Activated CD4-positive, alpha-beta memory T cell treated with anti-CD3 and anti-CD28 coated beads for 36 hours (primary cell): ENCODE measurements at regions of chr3 and their contacts with region 1.

Region 1: DNA sequence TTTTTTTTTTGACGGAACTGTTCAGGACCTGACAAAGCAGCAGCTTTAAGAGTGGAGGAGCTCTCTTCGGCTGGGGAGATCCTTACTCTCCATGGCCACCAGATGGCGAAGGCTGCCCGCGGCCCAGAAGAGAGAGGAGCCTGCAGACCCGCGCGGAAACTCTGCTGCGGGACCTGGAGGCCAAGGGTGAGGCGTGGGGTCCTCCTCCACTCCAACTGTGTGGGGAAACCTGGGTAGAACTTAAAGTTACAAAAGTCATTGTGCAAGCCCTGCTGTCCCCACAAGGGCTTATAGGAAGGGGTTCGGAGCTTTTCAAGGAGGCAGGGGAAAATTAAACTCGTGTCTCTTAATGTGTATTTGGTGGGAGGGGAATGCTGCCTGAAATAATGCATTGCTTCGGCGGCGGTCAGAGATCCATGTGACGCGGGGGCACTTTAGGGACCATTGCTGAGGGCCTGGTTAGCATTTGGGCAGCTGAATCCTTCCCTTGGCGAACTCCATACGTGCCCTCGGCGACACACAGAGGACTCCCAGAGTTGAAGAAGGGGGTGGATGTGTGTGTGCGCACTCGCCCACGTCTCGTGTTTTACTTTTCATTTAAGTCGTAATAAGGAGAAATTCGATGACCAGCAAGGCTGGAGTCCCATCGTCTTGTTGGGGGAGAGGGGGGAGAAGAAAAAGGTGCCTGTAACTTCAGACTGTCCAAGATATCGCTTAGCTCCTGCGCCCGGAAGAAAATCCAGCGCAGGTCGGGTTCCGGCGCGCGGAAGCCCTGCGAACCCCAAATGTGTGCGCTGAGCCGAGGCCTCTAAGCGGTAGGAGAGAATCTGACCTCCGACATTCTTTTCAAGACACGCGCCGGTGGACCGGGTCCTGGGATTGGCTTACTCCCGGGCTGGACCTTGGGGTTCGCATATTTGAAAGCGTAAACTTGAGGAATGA is 9.7 kb downstream of the EOMES start:
- DNase-seq: peak; percentile 85
- H3K4me3 Mint-ChIP-seq: peak overlapping the region; percentile 84
- H3K27ac Mint-ChIP-seq: no peak overlapping the region
- H3K4me1 Mint-ChIP-seq: peaks cover 19% of the 10 kb centered on the region
- H3K27me3 Mint-ChIP-seq: peaks cover 40% of the 10 kb centered on the region

Region 2: DNA sequence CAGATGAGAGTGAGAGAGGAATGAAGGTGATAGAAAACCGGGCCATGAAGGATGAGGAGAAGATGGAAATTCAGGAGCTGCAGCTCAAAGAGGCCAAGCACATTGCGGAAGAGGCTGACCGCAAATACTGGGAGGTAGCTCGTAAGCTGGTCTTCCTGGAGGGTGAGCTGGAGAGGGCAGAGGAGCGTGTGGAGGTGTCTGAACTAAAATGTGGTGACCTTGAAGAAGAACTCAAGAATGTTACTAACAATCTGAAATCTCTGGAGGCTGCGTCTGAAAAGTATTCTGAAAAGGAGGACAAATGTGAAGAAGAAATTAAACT is 79.2 kb before region 1 on chr3:
- CTCF ChIA-PET with region 1: no interaction called
- POLR2A ChIA-PET with region 1: no interaction called
- intact Hi-C with region 1: no loop called
- DNase-seq: no peak
- H3K4me3 Mint-ChIP-seq: peak overlapping the region; percentile 83
- H3K27ac Mint-ChIP-seq: peak overlapping the region; percentile 85
- H3K4me1 Mint-ChIP-seq: peaks cover 39% of the 10 kb centered on the region
- H3K27me3 Mint-ChIP-seq: no peaks in the 10 kb centered on the region

Region 3: GRCh38 chr3:27666708-27667107 is 45.7 kb before region 1 on chr3:
- CTCF ChIA-PET with region 1: no interaction called
- POLR2A ChIA-PET with region 1: no interaction called
- intact Hi-C with region 1: no loop called
- DNase-seq: peak; percentile 28
- H3K4me3 Mint-ChIP-seq: no peak overlapping the region
- H3K27ac Mint-ChIP-seq: no peak overlapping the region
- H3K4me1 Mint-ChIP-seq: peaks cover 9% of the 10 kb centered on the region
- H3K27me3 Mint-ChIP-seq: no peaks in the 10 kb centered on the region

Region 4: GRCh38 chr3:27681245-27681748 is 31.1 kb before region 1 on chr3:
- CTCF ChIA-PET with region 1: interaction called, 11 read pairs
- POLR2A ChIA-PET with region 1: no interaction called
- intact Hi-C with region 1: no loop called
- DNase-seq: no peak
- H3K4me3 Mint-ChIP-seq: peak overlapping the region; percentile 68
- H3K27ac Mint-ChIP-seq: peak overlapping the region; percentile 72
- H3K4me1 Mint-ChIP-seq: peaks cover 19% of the 10 kb centered on the region
- H3K27me3 Mint-ChIP-seq: no peaks in the 10 kb centered on the region

Region 5: DNA sequence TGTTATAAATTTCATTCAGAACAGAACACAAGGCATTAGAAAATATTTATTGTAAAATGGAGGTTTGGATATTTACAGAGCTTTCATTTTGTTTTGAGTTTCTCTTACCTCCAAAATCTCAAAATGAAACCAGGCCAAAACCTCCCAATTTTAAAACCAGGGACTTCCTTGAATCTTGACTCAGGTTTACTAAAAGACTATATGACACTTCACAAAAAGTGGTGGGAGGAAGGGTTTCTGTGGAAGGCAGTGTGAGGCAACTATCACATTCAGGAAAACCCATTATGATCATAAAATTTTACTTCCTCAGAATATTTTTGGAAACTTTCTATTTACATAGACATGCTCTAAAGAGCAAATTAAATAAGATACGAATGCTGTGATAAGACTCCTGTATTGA is 215.5 kb after region 1 on chr3:
- CTCF ChIA-PET with region 1: no interaction called
- POLR2A ChIA-PET with region 1: no interaction called
- intact Hi-C with region 1: no loop called
- DNase-seq: no peak
- H3K4me3 Mint-ChIP-seq: no peak overlapping the region
- H3K27ac Mint-ChIP-seq: peak overlapping the region; percentile 51
- H3K4me1 Mint-ChIP-seq: peaks cover 30% of the 10 kb centered on the region
- H3K27me3 Mint-ChIP-seq: peaks cover 1% of the 10 kb centered on the region

Region 6: DNA sequence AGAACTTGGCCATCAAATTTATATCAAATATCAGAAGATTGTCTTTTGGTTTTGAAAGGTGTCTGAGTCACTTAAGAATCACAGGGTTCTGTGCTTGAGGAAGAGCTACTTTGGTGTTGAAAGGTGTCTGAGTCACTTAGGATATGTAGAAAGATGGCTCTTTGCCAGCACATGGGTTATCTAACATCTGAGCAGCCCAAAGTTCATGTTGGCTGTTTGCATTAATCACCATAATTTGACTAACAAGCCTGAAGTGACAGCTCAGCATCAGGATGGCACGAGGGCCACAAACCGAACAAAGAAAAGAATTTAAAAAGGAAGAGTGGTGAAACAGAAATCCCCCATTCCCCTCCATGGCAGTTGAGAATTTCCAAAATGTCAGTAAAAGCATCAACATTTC is 338.5 kb after region 1 on chr3:
- CTCF ChIA-PET with region 1: interaction called, 8 read pairs
- POLR2A ChIA-PET with region 1: no interaction called
- intact Hi-C with region 1: loop called (anchors 2 kb)
- DNase-seq: peak; percentile 52
- H3K4me3 Mint-ChIP-seq: no peak overlapping the region
- H3K27ac Mint-ChIP-seq: peak overlapping the region; percentile 13
- H3K4me1 Mint-ChIP-seq: peaks cover 26% of the 10 kb centered on the region
- H3K27me3 Mint-ChIP-seq: peaks cover 10% of the 10 kb centered on the region

Region 7: GRCh38 chr3:28286595-28286994 is 574.2 kb after region 1 on chr3:
- CTCF ChIA-PET with region 1: interaction called, 38 read pairs
- POLR2A ChIA-PET with region 1: no interaction called
- intact Hi-C with region 1: loop called (anchors 1 kb)
- DNase-seq: no peak
- H3K4me3 Mint-ChIP-seq: no peak overlapping the region
- H3K27ac Mint-ChIP-seq: no peak overlapping the region
- H3K4me1 Mint-ChIP-seq: peaks cover 13% of the 10 kb centered on the region
- H3K27me3 Mint-ChIP-seq: no peaks in the 10 kb centered on the region

Region 8: GRCh38 chr3:28328188-28329151 is 616.1 kb after region 1 on chr3:
- CTCF ChIA-PET with region 1: interaction called, 89 read pairs
- POLR2A ChIA-PET with region 1: interaction called, 3 read pairs
- intact Hi-C with region 1: loop called (anchors 1 kb)
- DNase-seq: no peak
- H3K4me3 Mint-ChIP-seq: no peak overlapping the region
- H3K27ac Mint-ChIP-seq: no peak overlapping the region
- H3K4me1 Mint-ChIP-seq: peaks cover 18% of the 10 kb centered on the region
- H3K27me3 Mint-ChIP-seq: no peaks in the 10 kb centered on the region

Region 9: DNA sequence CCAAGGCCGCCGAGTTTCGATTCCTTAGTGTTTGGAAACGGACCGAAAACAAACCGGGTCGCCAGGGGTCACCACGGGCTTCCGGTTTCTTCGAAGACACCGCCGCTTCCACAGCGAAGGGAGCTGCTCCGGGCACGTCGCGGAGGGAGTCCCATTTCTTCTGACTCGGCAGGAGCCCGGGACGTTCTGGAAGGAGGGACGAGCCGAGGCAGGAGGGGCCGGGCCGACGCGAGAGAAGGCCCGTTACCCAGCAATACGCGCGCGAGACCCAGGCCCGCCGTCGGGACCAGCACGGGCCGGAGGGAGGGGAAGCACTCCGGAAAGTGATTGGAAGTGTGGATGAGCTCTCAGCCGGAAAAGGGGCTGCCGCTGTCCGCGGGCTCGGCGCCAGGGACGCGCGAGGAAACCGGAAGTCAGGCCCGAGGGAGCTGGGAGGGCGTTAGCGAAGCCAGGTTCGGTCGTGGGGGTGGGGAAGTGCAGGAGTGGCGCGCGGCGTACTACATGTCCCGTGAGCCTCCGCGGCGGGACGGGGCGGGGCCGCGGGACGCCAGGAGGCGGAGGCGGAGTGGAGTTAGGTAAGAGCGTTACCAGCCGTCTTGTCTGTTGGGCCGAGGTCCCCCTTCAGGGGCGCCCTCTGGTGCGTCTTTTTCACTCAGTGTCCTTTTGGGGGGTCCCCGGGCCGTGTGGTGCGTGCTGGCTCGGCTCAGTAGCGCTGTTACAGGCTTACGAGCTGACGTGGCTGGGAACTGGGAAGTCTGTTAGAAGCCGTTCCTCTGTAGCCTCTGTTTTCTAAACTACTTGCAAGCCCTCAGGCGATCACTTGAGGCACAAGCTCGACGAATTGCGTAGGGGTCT is 636.4 kb after region 1 on chr3 and contains the starts of genes AZI2 and ZCWPW2:
- CTCF ChIA-PET with region 1: interaction called, 11 read pairs
- POLR2A ChIA-PET with region 1: interaction called, 6 read pairs
- intact Hi-C with region 1: loop called (anchors 1 kb)
- DNase-seq: peak; percentile 94
- H3K4me3 Mint-ChIP-seq: peak within 1 kb of the TSS; percentile 95
- H3K27ac Mint-ChIP-seq: peak within 1 kb of the TSS; percentile 88
- H3K4me1 Mint-ChIP-seq: peaks cover 40% of the 10 kb centered on the region
- H3K27me3 Mint-ChIP-seq: no peaks in the 10 kb centered on the region
- total RNA-seq, gene AZI2: 35.5 to 38.9 TPM
- total RNA-seq, gene ZCWPW2: 0.39 to 0.43 TPM